Tibial artery (tissue), 4 donors: ENCODE measurements at regions of chr3 and their contacts with region 1.

Region 1: GRCh38 chr3:128426128-128426921 is 40.4 kb downstream of the DNAJB8 start:
- DNase-seq: no peak
- H3K4me3 ChIP-seq: peak overlapping the region in 1 of 2 donors; percentile 32
- H3K27ac ChIP-seq: no peak overlapping the region
- H3K4me1 ChIP-seq: peaks cover 0 to 12% (median 6%) of the 10 kb centered on the region in 4 donors
- H3K27me3 ChIP-seq: peaks cover 0 to 55% of the 10 kb centered on the region in 2 donors
- CTCF ChIP-seq: peak; percentile 77 to 95

Region 2: DNA sequence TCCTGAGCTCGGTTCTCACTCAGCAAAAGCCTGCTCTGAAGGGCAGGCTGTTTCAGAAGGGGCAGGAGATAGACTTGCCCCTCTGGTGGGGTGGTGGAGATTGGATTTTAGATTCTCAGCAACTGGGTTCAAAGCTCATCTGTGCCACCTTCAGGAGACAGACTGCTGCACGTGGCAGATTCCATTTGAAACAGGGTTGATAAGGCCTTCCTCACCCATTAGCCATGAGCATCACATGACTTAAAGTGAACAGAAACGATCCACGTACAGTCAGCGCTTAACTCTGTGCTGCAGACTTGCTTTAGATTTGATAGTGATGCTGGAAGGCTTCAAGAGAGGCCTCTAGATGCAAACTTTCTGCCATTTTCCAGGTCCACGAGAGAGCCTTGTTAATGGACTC is 569.0 kb before region 1 on chr3:
- intact Hi-C with region 1: no loop called
- DNase-seq: no peak
- H3K4me3 ChIP-seq: no peak overlapping the region
- H3K27ac ChIP-seq: no peak overlapping the region
- H3K4me1 ChIP-seq: no peaks in the 10 kb centered on the region
- H3K27me3 ChIP-seq: no peaks in the 10 kb centered on the region
- CTCF ChIP-seq: peak; percentile 15 to 16

Region 3: DNA sequence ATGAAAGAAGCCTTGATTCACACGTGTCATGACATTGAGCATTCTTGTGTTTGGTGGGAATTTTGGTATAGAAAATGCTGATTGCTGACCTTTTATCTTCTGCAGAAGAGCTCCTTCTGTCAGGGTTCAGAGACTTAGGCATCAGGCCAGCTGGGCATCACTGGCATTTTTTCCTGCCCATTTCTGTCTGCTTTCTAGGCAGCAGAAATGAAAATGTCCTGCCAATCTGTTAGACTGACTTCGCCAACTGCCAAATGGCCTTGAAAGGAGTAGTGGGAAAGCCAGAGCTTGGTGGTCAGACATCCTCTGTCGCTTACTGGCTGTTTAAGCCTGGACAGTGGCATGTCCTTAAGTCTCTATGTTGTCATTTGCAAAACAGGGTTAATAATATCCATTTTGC is 215.6 kb before region 1 on chr3:
- intact Hi-C with region 1: no loop called
- DNase-seq: no peak
- H3K4me3 ChIP-seq: no peak overlapping the region
- H3K27ac ChIP-seq: no peak overlapping the region
- H3K4me1 ChIP-seq: peaks cover 0 to 12% (median 5%) of the 10 kb centered on the region in 4 donors
- H3K27me3 ChIP-seq: no peaks in the 10 kb centered on the region
- CTCF ChIP-seq: no peak

Region 4: GRCh38 chr3:128486681-128487537 is 60.6 kb after region 1 on chr3:
- intact Hi-C with region 1: no loop called
- DNase-seq: peak in 1 of 2 donors; percentile 62
- H3K4me3 ChIP-seq: peak overlapping the region; percentile 51 to 52
- H3K27ac ChIP-seq: no peak overlapping the region
- H3K4me1 ChIP-seq: peaks cover 0 to 65% (median 51%) of the 10 kb centered on the region in 4 donors
- H3K27me3 ChIP-seq: peaks cover 15 to 98% of the 10 kb centered on the region in 2 donors
- CTCF ChIP-seq: no peak

Region 5: GRCh38 chr3:128497387-128498126 is 71.2 kb after region 1 on chr3:
- intact Hi-C with region 1: loop called (anchors 2 kb)
- DNase-seq: peak; percentile 22 to 70
- H3K4me3 ChIP-seq: peak overlapping the region; percentile 43 to 54
- H3K27ac ChIP-seq: no peak overlapping the region
- H3K4me1 ChIP-seq: peaks cover 0 to 26% (median 19%) of the 10 kb centered on the region in 4 donors
- H3K27me3 ChIP-seq: peaks cover 0 to 96% of the 10 kb centered on the region in 2 donors
- CTCF ChIP-seq: peak; percentile 54 to 57

Region 6: GRCh38 chr3:128607710-128608048 is 181.4 kb after region 1 on chr3:
- intact Hi-C with region 1: loop called (anchors 5 kb)
- DNase-seq: no peak
- H3K4me3 ChIP-seq: peak overlapping the region; percentile 52 to 61
- H3K27ac ChIP-seq: peak overlapping the region; percentile 51 to 69
- H3K4me1 ChIP-seq: peaks cover 0 to 12% (median 5%) of the 10 kb centered on the region in 4 donors
- H3K27me3 ChIP-seq: peaks cover 0 to 11% of the 10 kb centered on the region in 2 donors
- CTCF ChIP-seq: no peak